ENCODE measurements at regions of chr2 and their contacts with region 1.

Region 1: DNA sequence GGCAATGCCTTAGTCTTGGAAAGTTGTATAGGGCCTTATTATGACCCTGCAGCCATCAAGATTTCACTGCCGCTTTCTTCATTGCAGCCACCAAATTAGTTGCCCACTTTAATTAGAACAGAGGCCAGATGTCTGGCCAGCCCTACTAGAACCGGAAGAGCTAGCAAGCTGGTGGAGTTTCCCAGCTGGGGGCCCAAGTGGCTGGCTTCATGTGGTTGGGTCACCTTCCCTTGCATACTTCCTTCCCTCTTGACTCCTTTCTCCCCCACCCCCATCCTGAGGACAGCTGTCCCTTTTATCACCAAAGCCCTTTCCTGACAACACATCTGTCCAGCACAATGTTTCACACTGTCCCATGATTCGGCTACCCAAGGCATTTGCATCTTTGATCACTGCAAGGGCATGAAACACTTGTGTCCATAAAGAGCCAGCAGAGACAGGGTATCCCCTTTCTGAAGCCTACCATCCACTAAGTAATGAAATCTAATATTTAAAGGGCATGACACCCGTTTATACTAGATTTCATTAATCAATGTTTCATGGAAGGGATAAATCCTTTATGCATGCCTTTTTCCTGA is 187.2 kb downstream of the BCL11A start:
- DNase-seq: peak; percentile 89
- H3K4me3 ChIP-seq: peak overlapping the region; percentile 35
- H3K27ac ChIP-seq: peak overlapping the region; percentile 85
- H3K4me1 ChIP-seq: peaks cover 100% of the 10 kb centered on the region
- CTCF ChIP-seq: no peak

Region 2: GRCh38 chr2:60413814-60414168 is 47.6 kb after region 1 on chr2:
- CTCF ChIA-PET with region 1: no interaction called
- POLR2A ChIA-PET with region 1: interaction called, 7 read pairs
- intact Hi-C with region 1: loop called (anchors 1 kb)
- DNase-seq: peak; percentile 81
- H3K4me3 ChIP-seq: no peak overlapping the region
- H3K27ac ChIP-seq: peak overlapping the region; percentile 39
- H3K4me1 ChIP-seq: peaks cover 46% of the 10 kb centered on the region
- CTCF ChIP-seq: no peak

Region 3: GRCh38 chr2:60446413-60447267 is 80.4 kb after region 1 on chr2:
- CTCF ChIA-PET with region 1: interaction called, 3 read pairs
- POLR2A ChIA-PET with region 1: interaction called, 14 read pairs
- intact Hi-C with region 1: no loop called
- DNase-seq: peak; percentile 72
- H3K4me3 ChIP-seq: peak overlapping the region; percentile 36
- H3K27ac ChIP-seq: peak overlapping the region; percentile 80
- H3K4me1 ChIP-seq: peaks cover 73% of the 10 kb centered on the region
- CTCF ChIP-seq: no peak

Region 4: GRCh38 chr2:60597346-60597745 is 231.1 kb after region 1 on chr2:
- CTCF ChIA-PET with region 1: no interaction called
- POLR2A ChIA-PET with region 1: no interaction called
- intact Hi-C with region 1: no loop called
- DNase-seq: no peak
- H3K4me3 ChIP-seq: no peak overlapping the region
- H3K27ac ChIP-seq: no peak overlapping the region
- H3K4me1 ChIP-seq: peaks cover 8% of the 10 kb centered on the region
- CTCF ChIP-seq: no peak

Measured in OCI-LY7 (cell line).